ENCODE measurements at regions of chr17 and their contacts with region 1.

Region 1: GRCh38 chr17:1399679-1400512 is at the start of gene YWHAE:
- DNase-seq: peak; percentile 99
- H3K4me3 ChIP-seq: peak within 1 kb of the TSS; percentile 77 to 91 (median 88)
- H3K27ac ChIP-seq: peak within 1 kb of the TSS; percentile 94 to 98 (median 96)
- H3K4me1 ChIP-seq: peaks cover 0 to 42% (median 39%) of the 10 kb centered on the region in 4 donors
- H3K27me3 ChIP-seq: no peaks in the 10 kb centered on the region
- CTCF ChIP-seq: no peak
- EP300 ChIP-seq: peak in 1 of 4 donors; percentile 16
- POLR2A ChIP-seq: peak; percentile 94 to 97
- total RNA-seq, gene YWHAE: 353 to 507 (median 431) TPM

Region 2: GRCh38 chr17:1371893-1372590 is 27.9 kb before region 1 on chr17:
- intact Hi-C with region 1: no loop called
- DNase-seq: no peak
- H3K4me3 ChIP-seq: no peak overlapping the region
- H3K27ac ChIP-seq: peak overlapping the region in 3 of 4 donors; percentile 34 to 83 (median 79)
- H3K4me1 ChIP-seq: peaks cover 0 to 100% (median 93%) of the 10 kb centered on the region in 4 donors
- H3K27me3 ChIP-seq: no peaks in the 10 kb centered on the region
- CTCF ChIP-seq: no peak
- EP300 ChIP-seq: no peak
- POLR2A ChIP-seq: no peak

Region 3: DNA sequence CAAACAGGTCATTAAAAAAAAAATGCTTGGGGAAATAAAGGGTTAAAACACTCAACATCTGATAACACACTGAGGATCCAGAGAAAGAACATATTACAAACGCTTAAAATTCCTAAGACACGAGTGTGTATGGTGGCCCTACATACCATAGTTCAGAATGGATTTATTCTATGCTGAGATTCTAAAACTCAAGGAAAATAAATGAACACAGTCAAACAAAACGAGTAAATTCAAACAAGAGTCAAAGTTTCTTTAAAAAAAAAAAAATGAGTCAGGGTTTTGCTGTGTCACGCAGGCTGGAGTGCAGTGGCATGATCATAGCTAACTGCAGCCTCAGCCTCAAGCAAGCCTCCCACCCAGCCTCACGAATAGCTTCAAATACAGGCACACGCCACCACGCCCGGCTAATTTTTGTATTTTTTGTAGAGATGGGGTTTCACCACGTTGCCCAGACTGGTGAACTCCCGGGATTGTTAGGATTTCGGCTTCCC is 38.7 kb after region 1 on chr17:
- intact Hi-C with region 1: loop called (anchors 5 kb)
- DNase-seq: no peak
- H3K4me3 ChIP-seq: peak overlapping the region in 1 of 4 donors; percentile 4
- H3K27ac ChIP-seq: peak overlapping the region; percentile 4 to 72 (median 56)
- H3K4me1 ChIP-seq: peaks cover 0 to 58% (median 47%) of the 10 kb centered on the region in 4 donors
- H3K27me3 ChIP-seq: no peaks in the 10 kb centered on the region
- CTCF ChIP-seq: no peak
- EP300 ChIP-seq: no peak
- POLR2A ChIP-seq: no peak

Region 4: GRCh38 chr17:1455797-1456599 is 56.1 kb after region 1 on chr17 and contains the start of gene CRK:
- intact Hi-C with region 1: loop called (anchors 5 kb)
- DNase-seq: peak; percentile 98
- H3K4me3 ChIP-seq: peak within 1 kb of the TSS; percentile 64 to 98 (median 81)
- H3K27ac ChIP-seq: peak within 1 kb of the TSS; percentile 96 to 100 (median 98)
- H3K4me1 ChIP-seq: peaks cover 0 to 62% (median 55%) of the 10 kb centered on the region in 4 donors
- H3K27me3 ChIP-seq: no peaks in the 10 kb centered on the region
- CTCF ChIP-seq: no peak
- EP300 ChIP-seq: peak in 1 of 4 donors; percentile 38
- POLR2A ChIP-seq: peak; percentile 53 to 81
- total RNA-seq, gene CRK: 61.5 to 88.7 (median 76.1) TPM

Measured in sigmoid colon (tissue), 7 donors.